Activated T-helper 2 cell treated with anti-CD3 and anti-CD28 coated beads, Interferon-gamma antibody, Interleukin-2, Interleukin-4, amounts not matched to agents 10 μg/mL and 5 μg/mL and 100 μg/mL, durations not matched to agents 14 hours and 24 hours and 36 hours (primary cell): ENCODE measurements at regions of chr6 and their contacts with region 1.

Region 1: GRCh38 chr6:25027221-25027916 is 91.6 kb upstream of the RIPOR2 start:
- DNase-seq: peak; percentile 78
- H3K4me3 Mint-ChIP-seq: peak overlapping the region; percentile 71
- H3K27ac Mint-ChIP-seq: peak overlapping the region; percentile 78
- H3K4me1 Mint-ChIP-seq: peaks cover 40% of the 10 kb centered on the region
- H3K27me3 Mint-ChIP-seq: no peaks in the 10 kb centered on the region

Region 2: GRCh38 chr6:24991810-24992467 is 35.4 kb before region 1 on chr6:
- intact Hi-C with region 1: no loop called
- DNase-seq: peak; percentile 59
- H3K4me3 Mint-ChIP-seq: no peak overlapping the region
- H3K27ac Mint-ChIP-seq: peak overlapping the region; percentile 33
- H3K4me1 Mint-ChIP-seq: peaks cover 30% of the 10 kb centered on the region
- H3K27me3 Mint-ChIP-seq: no peaks in the 10 kb centered on the region

Region 3: DNA sequence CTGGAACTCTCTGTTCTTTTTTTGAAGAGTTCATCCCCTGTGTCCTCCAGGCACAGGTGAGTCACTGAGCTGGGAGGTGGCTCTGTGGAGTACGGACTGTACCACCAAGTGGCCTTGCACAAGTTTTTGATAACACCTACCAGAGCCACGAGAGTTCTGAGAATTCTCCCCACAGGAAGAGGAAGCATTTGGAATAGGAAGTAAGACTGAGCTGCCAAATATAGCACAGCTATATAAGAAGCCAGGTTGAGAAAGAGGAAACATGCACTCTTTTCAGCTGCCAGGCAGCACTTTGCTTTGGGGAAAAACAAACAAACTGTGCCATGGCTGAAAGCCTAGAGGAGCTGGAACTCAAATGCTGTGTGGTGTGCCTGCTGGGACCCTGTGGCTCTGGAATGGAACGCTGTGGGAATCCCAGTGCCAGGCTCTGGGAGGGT is 20.8 kb before region 1 on chr6:
- intact Hi-C with region 1: loop called (anchors 1 kb)
- DNase-seq: peak; percentile 41
- H3K4me3 Mint-ChIP-seq: peak overlapping the region; percentile 27
- H3K27ac Mint-ChIP-seq: peak overlapping the region; percentile 83
- H3K4me1 Mint-ChIP-seq: peaks cover 68% of the 10 kb centered on the region
- H3K27me3 Mint-ChIP-seq: no peaks in the 10 kb centered on the region

Region 4: DNA sequence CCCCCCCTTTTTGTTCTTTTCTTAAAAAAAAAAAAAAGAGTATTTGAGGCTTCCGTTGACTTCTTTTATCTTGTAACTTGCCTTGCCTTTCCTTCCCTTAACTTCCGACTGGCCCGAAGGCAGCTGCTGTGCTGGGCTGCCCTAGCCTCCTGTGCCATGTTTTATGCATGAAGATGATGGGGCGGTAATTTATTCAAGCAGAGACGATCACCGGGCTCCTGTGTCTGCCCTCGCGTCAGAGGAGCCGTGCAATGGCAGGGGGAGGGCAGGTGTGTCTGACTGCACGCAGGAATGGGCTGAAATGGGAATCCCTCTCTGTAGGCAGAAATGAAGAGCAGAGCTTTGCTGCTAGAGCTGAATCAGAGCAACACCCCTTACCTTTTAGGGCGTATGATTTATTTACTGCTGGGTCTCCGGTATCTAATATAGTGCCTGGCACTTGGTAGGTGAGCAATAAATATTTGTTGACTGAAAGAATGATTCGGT is 14.7 kb after region 1 on chr6:
- intact Hi-C with region 1: loop called (anchors 1 kb)
- DNase-seq: peak; percentile 25
- H3K4me3 Mint-ChIP-seq: peak overlapping the region; percentile 88
- H3K27ac Mint-ChIP-seq: peak overlapping the region; percentile 86
- H3K4me1 Mint-ChIP-seq: peaks cover 51% of the 10 kb centered on the region
- H3K27me3 Mint-ChIP-seq: no peaks in the 10 kb centered on the region

Region 5: DNA sequence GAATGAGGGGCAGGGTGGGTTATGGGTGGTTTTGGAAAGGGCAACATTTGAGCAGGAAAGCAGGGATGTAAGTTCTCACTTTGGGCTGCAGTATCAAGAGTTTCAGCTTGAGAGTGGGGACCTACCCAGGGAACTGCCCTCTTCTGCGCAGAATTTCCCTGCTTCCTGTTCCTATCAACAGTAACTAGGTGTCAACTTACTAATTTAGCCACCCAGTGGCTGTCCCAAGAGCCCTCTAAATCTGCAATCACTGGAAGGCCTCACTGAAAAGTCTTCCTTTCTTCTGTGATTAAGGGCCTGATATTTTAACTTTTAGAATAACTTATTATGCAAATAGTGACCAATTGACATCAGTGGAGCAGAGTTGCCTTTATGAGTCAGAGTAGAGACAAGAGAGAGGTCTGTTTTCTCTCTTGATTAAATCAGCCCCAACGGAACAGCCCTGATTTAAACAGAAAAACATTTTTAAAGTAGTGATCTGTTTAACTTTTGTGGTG is 26.6 kb after region 1 on chr6:
- intact Hi-C with region 1: loop called (anchors 1 kb)
- DNase-seq: no peak
- H3K4me3 Mint-ChIP-seq: no peak overlapping the region
- H3K27ac Mint-ChIP-seq: peak overlapping the region; percentile 73
- H3K4me1 Mint-ChIP-seq: peaks cover 69% of the 10 kb centered on the region
- H3K27me3 Mint-ChIP-seq: no peaks in the 10 kb centered on the region

Region 6: DNA sequence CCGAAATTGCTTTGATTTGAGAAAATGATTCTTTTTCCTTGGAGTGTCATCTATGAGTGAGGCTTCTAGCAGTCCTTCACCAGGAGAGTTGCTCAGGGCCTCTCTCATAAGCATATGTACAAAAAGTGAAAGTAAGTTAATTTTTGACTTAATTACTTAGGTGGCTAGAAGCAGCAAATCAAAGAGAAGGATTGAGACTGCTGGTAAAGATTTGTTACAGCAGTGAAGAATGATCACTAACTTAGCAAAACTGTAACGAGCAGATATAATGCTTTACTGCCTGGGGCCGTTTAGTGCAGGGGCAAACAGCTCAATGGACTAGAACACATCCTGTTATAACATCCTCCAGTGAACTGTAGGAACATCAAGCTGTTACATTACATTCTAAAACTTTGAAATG is 76.2 kb after region 1 on chr6:
- intact Hi-C with region 1: no loop called
- DNase-seq: no peak
- H3K4me3 Mint-ChIP-seq: no peak overlapping the region
- H3K27ac Mint-ChIP-seq: peak overlapping the region; percentile 56
- H3K4me1 Mint-ChIP-seq: peaks cover 39% of the 10 kb centered on the region
- H3K27me3 Mint-ChIP-seq: no peaks in the 10 kb centered on the region

Region 7: GRCh38 chr6:25179051-25179778 is 151.8 kb after region 1 on chr6:
- intact Hi-C with region 1: loop called (anchors 5 kb)
- DNase-seq: no peak
- H3K4me3 Mint-ChIP-seq: peak overlapping the region; percentile 39
- H3K27ac Mint-ChIP-seq: peak overlapping the region; percentile 86
- H3K4me1 Mint-ChIP-seq: peaks cover 64% of the 10 kb centered on the region
- H3K27me3 Mint-ChIP-seq: no peaks in the 10 kb centered on the region

Region 8: GRCh38 chr6:25413207-25413905 is 386.0 kb after region 1 on chr6:
- intact Hi-C with region 1: no loop called
- DNase-seq: no peak
- H3K4me3 Mint-ChIP-seq: no peak overlapping the region
- H3K27ac Mint-ChIP-seq: no peak overlapping the region
- H3K4me1 Mint-ChIP-seq: peaks cover 16% of the 10 kb centered on the region
- H3K27me3 Mint-ChIP-seq: peaks cover 3% of the 10 kb centered on the region